ENCODE measurements at regions of chr4 and their contacts with region 1.

Region 1: DNA sequence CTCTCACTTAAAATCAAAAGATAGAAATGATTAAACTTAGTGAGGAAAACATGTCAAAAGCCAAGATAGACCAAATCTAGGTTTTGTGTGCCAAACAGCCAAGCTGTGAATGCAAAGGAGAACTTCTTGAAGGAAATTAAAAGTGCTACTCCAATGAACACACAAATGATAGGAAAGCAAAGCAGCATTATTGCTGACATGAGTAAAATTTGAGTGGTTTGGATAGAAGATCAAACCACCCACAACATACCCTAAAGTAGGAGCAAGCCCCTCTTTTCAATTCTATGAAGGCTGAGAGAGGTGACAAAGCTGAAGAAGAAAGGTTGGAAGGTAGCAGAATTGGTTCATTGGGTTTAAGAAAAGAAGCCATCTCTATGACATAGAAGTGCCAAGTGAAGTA is 56.8 kb downstream of the SLC39A8 start:
- DNase-seq: no peak
- ATAC-seq: no peak
- H3K4me3 Mint-ChIP-seq: no peak overlapping the region
- H3K27ac Mint-ChIP-seq: no peak overlapping the region
- H3K4me1 Mint-ChIP-seq: no peaks in the 10 kb centered on the region
- H3K27me3 Mint-ChIP-seq: no peaks in the 10 kb centered on the region

Region 2: DNA sequence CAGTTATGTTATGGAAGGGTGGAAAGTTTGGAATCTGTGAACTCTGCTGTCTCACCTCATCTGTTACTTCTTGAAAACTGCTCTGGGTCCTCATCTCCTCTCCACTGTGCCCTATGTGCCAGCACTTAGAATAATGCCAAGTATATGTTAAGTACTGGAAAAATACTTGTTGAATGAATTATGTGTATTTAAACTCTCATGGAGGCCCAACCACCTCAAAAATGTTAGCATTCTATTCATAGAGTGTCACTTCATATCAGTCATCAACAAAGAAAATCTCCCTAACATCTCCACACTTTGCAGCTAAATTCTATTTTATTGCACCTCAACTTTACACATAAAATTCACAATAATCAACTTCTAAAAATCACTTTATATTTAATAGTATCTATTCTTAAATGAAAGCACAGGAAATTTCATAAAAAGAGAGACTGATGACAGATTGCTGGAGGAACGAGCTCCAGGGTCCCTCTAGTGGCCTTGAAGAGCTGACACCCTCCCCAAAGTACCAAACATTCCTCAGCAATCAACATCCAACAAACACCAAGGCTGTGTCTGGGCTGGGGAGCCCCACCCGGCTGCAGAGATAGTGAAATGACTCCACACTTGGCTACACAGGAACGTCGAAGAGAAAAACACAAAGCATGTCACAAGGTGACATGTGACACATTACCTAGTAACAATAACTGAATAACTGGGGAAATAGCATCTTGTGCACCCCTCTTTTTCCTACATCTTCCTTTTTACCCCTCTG is 11.0 kb after region 1 on chr4:
- CTCF ChIA-PET with region 1: interaction called, 29 read pairs
- POLR2A ChIA-PET with region 1: no interaction called
- DNase-seq: peak; percentile 35
- ATAC-seq: peak; percentile 67
- H3K4me3 Mint-ChIP-seq: no peak overlapping the region
- H3K27ac Mint-ChIP-seq: no peak overlapping the region
- H3K4me1 Mint-ChIP-seq: no peaks in the 10 kb centered on the region
- H3K27me3 Mint-ChIP-seq: no peaks in the 10 kb centered on the region

Measured in activated CD8-positive, alpha-beta T cell treated with anti-CD3 and anti-CD28 coated beads, Interleukin-2, amount 10 ng/mL, durations not matched to agents 7 days and 5 days (primary cell).